A673 (cell line): ENCODE measurements at regions of chr10 and their contacts with region 1.

Region 1: GRCh38 chr10:21495752-21496342 is 29.6 kb downstream of the SKIDA1 start:
- DNase-seq: peak; percentile 93
- H3K4me3 ChIP-seq: peak overlapping the region; percentile 92
- H3K27ac ChIP-seq: peak overlapping the region; percentile 92
- H3K4me1 ChIP-seq: peaks cover 9% of the 10 kb centered on the region
- H3K27me3 ChIP-seq: no peaks in the 10 kb centered on the region
- CTCF ChIP-seq: peak; percentile 84

Region 2: GRCh38 chr10:19651549-19651948 is 1844.3 kb before region 1 on chr10:
- CTCF ChIA-PET with region 1: no interaction called
- POLR2A ChIA-PET with region 1: no interaction called
- intact Hi-C with region 1: no loop called
- DNase-seq: no peak
- H3K4me3 ChIP-seq: no peak overlapping the region
- H3K27ac ChIP-seq: no peak overlapping the region
- H3K4me1 ChIP-seq: no peaks in the 10 kb centered on the region
- H3K27me3 ChIP-seq: no peaks in the 10 kb centered on the region
- CTCF ChIP-seq: no peak

Region 3: DNA sequence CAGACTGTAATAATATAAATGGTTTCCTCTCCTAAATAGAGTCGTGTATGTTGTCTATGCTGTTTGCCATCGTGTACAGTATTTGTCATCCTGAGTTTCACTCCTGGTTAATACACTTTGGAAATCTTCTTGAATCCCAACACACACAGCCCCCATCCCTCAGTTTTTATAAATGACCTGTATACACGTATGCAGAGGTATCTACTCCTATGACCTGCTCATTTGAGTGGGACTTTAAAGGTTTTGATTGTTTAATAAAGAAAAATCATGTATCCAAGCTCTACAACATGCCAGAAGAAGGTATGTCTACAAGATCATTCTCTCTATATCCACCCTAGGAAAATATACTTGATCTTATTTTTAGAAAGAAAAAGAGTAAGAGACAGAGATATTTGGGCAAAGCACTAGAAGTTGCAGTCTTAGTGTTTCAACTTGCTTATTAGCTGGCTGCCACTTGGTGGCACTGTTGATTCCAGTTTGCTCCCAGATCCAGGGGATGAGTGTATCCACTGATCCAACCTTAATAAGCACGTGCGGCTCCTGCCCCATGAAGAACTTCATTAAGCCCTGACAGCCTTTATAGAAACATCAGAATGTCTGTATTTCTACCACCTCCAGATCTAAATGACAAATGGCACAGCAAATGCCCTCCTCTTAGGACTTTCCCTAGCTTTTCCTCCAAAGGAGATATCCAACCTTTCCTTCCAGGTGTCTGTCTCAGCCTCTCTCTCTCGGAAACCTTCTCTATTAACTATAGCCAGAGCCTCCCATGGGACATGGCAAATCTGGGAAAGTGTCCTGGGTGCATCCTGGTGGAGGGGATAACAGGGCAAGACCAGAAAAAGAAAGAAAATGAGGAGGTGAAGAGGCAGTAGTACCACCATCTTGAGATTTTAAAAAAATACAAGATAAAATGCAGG is 417.2 kb before region 1 on chr10:
- CTCF ChIA-PET with region 1: no interaction called
- POLR2A ChIA-PET with region 1: no interaction called
- intact Hi-C with region 1: loop called (anchors 10 kb)
- DNase-seq: peak; percentile 87
- H3K4me3 ChIP-seq: no peak overlapping the region
- H3K27ac ChIP-seq: no peak overlapping the region
- H3K4me1 ChIP-seq: no peaks in the 10 kb centered on the region
- H3K27me3 ChIP-seq: peaks cover 19% of the 10 kb centered on the region
- CTCF ChIP-seq: peak; percentile 83

Region 4: GRCh38 chr10:21516242-21517131 is 20.6 kb after region 1 on chr10:
- CTCF ChIA-PET with region 1: interaction called, 7 read pairs
- POLR2A ChIA-PET with region 1: no interaction called
- intact Hi-C with region 1: loop called (anchors 2 kb)
- DNase-seq: peak; percentile 75
- H3K4me3 ChIP-seq: peak overlapping the region; percentile 59
- H3K27ac ChIP-seq: peak overlapping the region; percentile 33
- H3K4me1 ChIP-seq: peaks cover 46% of the 10 kb centered on the region
- H3K27me3 ChIP-seq: no peaks in the 10 kb centered on the region
- CTCF ChIP-seq: no peak

Region 5: GRCh38 chr10:21732067-21732772 is 236.4 kb after region 1 on chr10:
- CTCF ChIA-PET with region 1: interaction called, 24 read pairs
- POLR2A ChIA-PET with region 1: no interaction called
- intact Hi-C with region 1: loop called (anchors 1 kb)
- DNase-seq: peak; percentile 88
- H3K4me3 ChIP-seq: no peak overlapping the region
- H3K27ac ChIP-seq: no peak overlapping the region
- H3K4me1 ChIP-seq: peaks cover 73% of the 10 kb centered on the region
- H3K27me3 ChIP-seq: no peaks in the 10 kb centered on the region
- CTCF ChIP-seq: peak; percentile 94

Region 6: DNA sequence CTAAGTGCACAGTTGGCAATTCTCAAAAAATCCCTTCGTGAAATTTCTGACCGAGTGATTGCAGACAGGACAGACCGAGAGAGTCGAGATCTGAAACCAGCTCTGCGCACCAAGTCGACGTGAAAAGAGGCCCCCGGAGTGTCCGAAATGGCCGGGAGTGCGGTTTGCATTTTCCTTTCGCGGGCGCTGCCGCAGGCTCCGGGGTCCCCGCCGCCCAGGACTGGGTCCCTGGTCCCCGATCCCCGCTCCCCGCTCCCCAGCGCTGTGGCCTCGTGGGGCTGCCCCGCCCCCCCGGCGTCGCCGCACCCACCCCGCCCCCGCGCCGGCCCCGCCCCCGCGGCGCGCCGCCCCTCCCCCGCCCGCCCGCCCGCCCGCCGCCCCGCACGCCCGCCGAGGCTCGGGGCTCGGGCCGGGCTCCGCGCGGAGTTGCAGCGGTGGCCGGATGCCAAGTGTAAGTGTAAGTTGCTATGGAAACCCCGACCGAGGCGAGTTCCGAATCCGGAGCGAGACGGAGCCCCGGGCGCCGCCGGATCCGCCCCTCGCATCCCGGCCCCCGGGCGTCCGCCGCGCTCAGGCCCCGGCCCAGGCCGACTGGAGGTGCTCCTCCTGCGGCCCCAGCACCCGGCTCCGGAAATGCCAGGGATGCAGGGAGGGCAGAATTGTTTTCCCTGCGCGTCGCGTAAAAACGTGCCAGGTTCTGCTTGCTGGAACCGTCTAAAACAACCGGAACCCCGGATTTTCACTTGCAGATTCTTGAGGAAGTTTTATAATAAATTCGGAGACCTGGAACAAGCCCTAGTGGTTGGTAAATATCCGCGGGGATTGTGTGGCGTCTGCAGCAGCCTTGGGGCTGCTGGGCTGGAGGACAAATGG is 829.7 kb after region 1 on chr10:
- CTCF ChIA-PET with region 1: no interaction called
- POLR2A ChIA-PET with region 1: no interaction called
- intact Hi-C with region 1: loop called (anchors 10 kb)
- DNase-seq: peak; percentile 84
- H3K4me3 ChIP-seq: peak overlapping the region; percentile 75
- H3K27ac ChIP-seq: peak overlapping the region; percentile 45
- H3K4me1 ChIP-seq: peaks cover 28% of the 10 kb centered on the region
- H3K27me3 ChIP-seq: peaks cover 12% of the 10 kb centered on the region
- CTCF ChIP-seq: no peak